ENCODE measurements at regions of chr16 and their contacts with region 1.

Region 1: DNA sequence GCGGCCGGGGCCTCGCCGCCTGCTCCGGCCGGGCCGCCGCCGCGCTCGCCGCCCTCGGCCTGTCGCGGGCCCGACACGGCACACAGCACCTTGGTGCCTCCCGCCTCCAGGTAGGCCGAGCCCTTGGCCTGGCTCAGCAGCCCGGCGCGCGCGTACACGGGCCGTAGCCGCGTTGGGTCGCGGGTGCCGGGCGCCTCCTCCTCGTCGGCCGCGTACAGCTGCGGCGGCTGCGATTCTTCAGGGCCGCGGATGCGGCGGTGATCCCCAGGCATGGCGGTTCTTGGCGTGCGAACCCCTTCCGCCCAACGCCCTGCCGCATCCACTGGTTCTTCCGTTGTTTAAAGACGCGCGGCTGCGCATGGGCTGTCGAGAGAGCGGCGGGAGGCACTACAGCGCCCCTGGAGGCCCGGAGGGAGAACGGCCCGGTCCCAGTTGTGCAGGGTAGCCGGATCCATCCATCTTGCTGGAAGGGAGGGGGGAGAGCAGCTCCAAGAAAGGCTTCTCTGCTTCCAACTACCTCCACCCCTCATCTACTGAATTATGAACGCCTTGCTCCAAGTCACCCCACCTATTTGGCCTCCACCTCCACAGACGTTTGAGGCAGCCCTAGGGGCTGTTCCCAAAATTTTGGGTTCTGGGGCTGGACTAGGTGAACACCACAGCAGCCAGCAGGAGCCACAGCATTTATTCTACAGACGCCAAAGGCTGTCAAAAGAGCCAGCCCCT is at the start of gene EXOSC6:
- DNase-seq: peak; percentile 93
- ATAC-seq: peak; percentile 86
- H3K4me3 Mint-ChIP-seq: peak within 1 kb of the TSS; percentile 88
- H3K27ac Mint-ChIP-seq: peak within 1 kb of the TSS; percentile 92
- H3K4me1 Mint-ChIP-seq: peaks cover 14% of the 10 kb centered on the region
- H3K27me3 Mint-ChIP-seq: no peaks in the 10 kb centered on the region
- total RNA-seq, gene EXOSC6: 28.8 to 29.4 TPM

Region 2: DNA sequence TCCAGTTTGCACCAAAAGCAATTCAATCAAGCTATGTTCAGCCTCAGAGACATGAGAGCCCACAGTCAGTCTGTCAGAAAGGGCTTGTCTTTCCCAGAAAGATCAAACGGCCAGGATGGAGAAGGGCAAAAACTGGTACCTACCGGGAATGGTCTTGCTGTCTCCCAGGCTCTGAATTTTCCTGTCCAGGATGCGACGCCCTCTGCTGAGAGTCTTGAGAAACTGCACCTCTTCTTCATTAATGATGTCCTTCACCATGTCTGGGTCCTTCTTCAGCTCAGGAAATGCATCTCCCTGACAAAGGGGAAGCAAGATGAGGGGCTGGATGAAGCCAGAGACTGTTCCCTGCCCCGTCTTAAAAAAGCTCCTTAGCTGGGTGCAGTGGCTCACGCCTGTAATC is 15.7 kb after region 1 on chr16:
- POLR2A ChIA-PET with region 1: interaction called, 12 read pairs
- DNase-seq: peak; percentile 30
- ATAC-seq: peak; percentile 33
- H3K4me3 Mint-ChIP-seq: no peak overlapping the region
- H3K27ac Mint-ChIP-seq: no peak overlapping the region
- H3K4me1 Mint-ChIP-seq: no peaks in the 10 kb centered on the region
- H3K27me3 Mint-ChIP-seq: no peaks in the 10 kb centered on the region

Region 3: GRCh38 chr16:70337814-70338213 is 86.0 kb after region 1 on chr16:
- POLR2A ChIA-PET with region 1: no interaction called
- DNase-seq: no peak
- ATAC-seq: no peak
- H3K4me3 Mint-ChIP-seq: no peak overlapping the region
- H3K27ac Mint-ChIP-seq: no peak overlapping the region
- H3K4me1 Mint-ChIP-seq: no peaks in the 10 kb centered on the region
- H3K27me3 Mint-ChIP-seq: no peaks in the 10 kb centered on the region